Mammary epithelial cell (primary cell): ENCODE measurements at regions of chr15 and their contacts with region 1.

Region 1: GRCh38 chr15:82809404-82810060 is at the start of gene WHAMM:
- DNase-seq: peak; percentile 99
- H3K4me3 ChIP-seq: peak within 1 kb of the TSS; percentile 92 to 97 (median 96)
- H3K27ac ChIP-seq: peak within 1 kb of the TSS; percentile 95
- H3K4me1 ChIP-seq: peaks cover 10% of the 10 kb centered on the region
- H3K27me3 ChIP-seq: no peaks in the 10 kb centered on the region
- CTCF ChIP-seq: no peak
- total RNA-seq, gene WHAMM: 7.3 to 8.6 TPM

Region 2: GRCh38 chr15:82540055-82540983 is 269.2 kb before region 1 on chr15 and contains the start of gene RPS17:
- CTCF ChIA-PET with region 1: no interaction called
- dilution Hi-C with region 1: no loop called
- in situ Hi-C with region 1: no loop called
- intact Hi-C with region 1: loop called (anchors 1 kb)
- DNase-seq: peak; percentile 96
- H3K4me3 ChIP-seq: peak within 1 kb of the TSS; percentile 83 to 92 (median 92)
- H3K27ac ChIP-seq: peak within 1 kb of the TSS; percentile 73
- H3K4me1 ChIP-seq: peaks cover 21% of the 10 kb centered on the region
- H3K27me3 ChIP-seq: no peaks in the 10 kb centered on the region
- CTCF ChIP-seq: peak; percentile 78 to 98
- total RNA-seq, gene RPS17: 1,069 to 1,616 TPM

Region 3: DNA sequence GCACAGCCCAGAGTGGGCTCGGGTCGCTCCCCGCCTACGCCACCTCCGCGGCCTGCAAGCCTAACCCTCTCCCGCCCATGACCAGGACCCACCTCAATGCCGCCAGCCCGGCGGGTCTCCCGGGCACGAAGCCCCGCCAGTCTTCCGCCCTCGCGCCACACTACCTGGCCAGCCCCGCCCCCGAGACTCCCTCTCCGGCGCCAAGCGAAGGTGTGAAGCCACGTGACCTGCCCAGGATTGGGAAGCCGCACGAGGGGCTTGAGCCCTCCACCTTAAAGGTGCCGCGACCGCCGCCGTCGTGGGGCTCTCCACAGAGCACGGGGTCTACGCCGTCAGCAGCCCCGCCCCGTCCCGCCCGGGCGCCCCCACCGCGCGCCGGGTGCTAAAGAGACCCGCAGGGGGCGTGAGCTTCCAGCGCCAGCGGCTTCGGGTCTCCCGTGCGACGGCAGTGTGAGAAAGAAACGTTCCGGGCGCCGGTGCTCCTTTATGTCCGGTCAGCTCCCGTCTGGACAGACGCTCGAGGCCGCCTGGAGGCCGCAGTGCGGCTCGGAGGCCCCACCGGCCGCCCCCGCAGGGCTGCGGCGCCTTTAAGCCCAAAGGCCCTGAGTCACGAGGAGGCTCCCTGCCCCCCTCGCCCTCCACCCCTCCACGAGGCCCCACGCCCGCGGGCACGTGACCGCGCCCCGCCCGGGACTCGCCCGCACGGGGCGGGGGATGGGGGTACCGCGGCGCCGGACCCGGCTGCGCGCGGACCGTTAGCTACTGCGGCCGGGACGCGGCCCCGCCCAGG is 162.3 kb before region 1 on chr15 and contains the start of gene CPEB1:
- CTCF ChIA-PET with region 1: no interaction called
- dilution Hi-C with region 1: no loop called
- in situ Hi-C with region 1: no loop called
- intact Hi-C with region 1: loop called (anchors 5 kb)
- DNase-seq: peak; percentile 6
- H3K4me3 ChIP-seq: peak within 1 kb of the TSS; percentile 40 to 43 (median 41)
- H3K27ac ChIP-seq: no peak within 1 kb of the TSS
- H3K4me1 ChIP-seq: peaks cover 12% of the 10 kb centered on the region
- H3K27me3 ChIP-seq: peaks cover 29% of the 10 kb centered on the region
- CTCF ChIP-seq: peak in 1 of 2 donors; percentile 20
- total RNA-seq, gene CPEB1: 0.38 to 8.7 TPM

Region 4: DNA sequence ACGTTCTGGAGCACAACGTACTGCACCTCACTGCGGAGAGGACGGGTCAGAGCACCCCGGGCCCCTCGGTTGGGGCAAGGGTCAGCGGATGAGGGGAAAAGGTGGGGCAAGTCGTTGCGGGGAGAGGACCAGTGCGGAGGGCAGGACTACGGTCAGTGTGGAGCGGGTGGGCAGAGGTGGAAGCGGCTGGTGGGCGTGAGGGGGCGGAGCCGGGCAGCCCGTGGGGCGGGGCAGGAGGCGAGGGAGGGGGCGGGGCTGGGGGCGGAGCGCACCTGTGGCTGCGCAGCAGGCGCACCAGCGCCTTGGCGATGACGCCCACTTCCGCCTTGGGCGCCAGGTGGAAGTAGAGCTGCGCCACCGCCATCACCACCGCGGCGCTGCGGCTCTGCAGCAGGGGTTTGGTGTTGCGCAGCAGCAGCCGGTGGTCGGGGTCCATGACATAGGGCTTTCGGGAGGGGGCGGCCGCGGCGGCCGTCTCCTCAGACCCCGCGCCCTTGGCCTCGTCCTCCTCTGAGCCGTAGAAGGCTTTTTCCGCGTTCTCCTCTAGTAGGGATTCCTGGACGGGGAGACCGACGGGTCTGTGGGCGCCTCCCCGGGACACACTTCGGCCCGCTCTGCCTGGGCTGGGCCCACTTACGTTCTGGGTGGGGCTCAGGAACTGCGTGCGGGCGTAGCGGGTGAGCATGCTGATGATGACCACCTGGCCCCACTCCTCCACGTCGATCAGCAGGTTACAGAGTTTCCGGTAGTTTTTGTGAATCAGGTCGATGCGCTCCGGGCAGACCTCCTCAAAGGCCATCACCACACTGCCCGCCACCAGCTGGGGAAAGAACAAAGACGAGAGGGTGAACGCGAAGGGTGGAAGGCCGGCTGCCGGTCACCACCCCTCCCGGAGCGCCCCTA is 129.1 kb before region 1 on chr15:
- CTCF ChIA-PET with region 1: no interaction called
- dilution Hi-C with region 1: no loop called
- in situ Hi-C with region 1: no loop called
- intact Hi-C with region 1: loop called (anchors 1 kb)
- DNase-seq: peak; percentile 71
- H3K4me3 ChIP-seq: peak overlapping the region; percentile 67 to 80 (median 69)
- H3K27ac ChIP-seq: no peak overlapping the region
- H3K4me1 ChIP-seq: peaks cover 10% of the 10 kb centered on the region
- H3K27me3 ChIP-seq: no peaks in the 10 kb centered on the region
- CTCF ChIP-seq: peak in 1 of 2 donors; percentile 57

Region 5: DNA sequence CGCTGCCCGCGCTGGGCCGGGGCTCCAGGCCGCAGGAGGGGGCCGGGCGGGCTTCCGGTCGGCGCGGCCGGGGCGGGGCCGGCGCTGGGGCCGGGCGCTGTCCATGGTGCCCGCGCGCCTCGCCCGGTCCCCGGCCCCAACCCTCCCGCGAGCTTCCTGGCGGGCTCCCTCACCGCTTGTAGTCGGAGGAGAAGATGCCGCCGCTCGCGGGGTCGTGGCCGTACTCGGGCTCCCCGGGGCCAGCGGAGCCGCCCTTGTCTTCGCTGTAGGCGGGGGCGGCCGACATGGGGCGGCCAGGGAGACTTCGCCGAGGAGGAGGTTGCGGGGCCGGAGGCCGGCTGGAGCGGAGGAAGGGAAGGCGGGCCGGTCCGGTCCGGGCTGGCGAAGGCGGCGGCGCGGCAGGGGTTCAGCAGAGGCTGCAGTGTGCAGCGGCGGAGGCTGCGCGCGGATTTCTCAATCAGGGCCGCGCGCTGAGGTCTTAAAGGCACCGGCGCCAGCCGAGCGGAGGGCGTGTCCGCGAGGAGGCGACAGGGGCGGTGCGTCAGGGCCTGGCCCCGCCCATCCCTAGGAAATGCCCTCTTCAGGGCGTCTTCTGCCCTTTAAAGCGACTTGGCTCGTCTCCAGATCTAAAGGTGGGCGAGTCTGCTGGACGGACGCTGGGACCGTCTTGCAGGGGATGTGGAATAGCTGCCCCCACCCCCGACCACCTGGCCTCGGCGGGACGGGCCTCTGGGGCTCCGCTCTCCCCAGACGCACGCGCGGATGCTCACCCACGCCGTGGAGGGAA is 99.9 kb before region 1 on chr15 and contains the start of gene AP3B2:
- CTCF ChIA-PET with region 1: no interaction called
- dilution Hi-C with region 1: no loop called
- in situ Hi-C with region 1: no loop called
- intact Hi-C with region 1: loop called (anchors 1 kb)
- DNase-seq: peak; percentile 69
- H3K4me3 ChIP-seq: peak within 1 kb of the TSS; percentile 88 to 96 (median 89)
- H3K27ac ChIP-seq: no peak within 1 kb of the TSS
- H3K4me1 ChIP-seq: peaks cover 7% of the 10 kb centered on the region
- H3K27me3 ChIP-seq: no peaks in the 10 kb centered on the region
- CTCF ChIP-seq: no peak
- total RNA-seq, gene AP3B2: 5.5 to 12.3 TPM

Region 6: DNA sequence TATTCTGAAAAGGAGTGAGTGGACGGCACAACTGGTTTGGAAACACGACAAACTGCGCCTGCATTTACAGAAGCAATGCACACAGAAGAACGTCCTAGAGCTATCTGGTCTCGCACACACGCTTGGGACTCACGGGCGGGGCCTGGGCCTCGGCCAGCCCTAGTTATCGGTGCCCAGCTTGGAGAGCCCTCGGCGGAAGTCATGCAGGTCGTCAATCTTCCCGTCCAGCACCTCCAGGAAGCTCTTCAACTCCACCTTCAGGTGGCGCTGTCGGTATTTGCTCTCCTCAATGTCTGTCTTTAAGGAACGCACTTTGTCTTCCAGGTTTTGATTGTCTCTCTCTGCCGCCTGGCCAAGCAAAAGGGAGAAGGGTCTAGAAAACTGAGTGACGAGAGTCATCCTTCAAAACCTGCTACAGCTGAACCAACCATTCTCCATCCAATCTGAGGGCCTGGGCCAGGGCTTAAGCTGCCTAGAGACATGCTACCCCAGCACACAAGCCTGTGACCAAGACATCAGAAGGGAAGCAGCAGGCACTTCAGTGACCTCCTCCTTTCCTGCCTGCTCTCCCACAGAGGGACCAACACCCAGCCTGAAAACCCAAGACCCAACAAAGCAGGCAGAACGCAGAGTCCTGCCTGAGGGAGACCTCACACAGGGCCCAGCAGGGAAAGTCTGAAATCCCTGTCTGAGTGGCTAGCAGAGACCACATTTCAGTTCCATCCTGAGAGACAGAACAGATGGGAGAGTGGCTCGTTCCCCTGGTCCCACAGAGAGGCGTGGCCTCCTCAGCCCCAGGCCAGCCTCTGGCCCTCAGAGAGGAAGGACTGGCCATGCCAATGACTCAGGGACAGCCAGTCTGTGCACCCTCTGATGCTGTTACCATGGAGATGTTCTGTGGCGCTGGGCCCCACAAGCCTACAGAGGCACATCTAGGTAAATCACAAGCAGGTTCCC is 40.3 kb after region 1 on chr15:
- CTCF ChIA-PET with region 1: no interaction called
- dilution Hi-C with region 1: loop called (anchors 5 kb)
- in situ Hi-C with region 1: no loop called
- intact Hi-C with region 1: no loop called
- DNase-seq: peak; percentile 42
- H3K4me3 ChIP-seq: no peak overlapping the region
- H3K27ac ChIP-seq: no peak overlapping the region
- H3K4me1 ChIP-seq: peaks cover under 1% of the 10 kb centered on the region
- H3K27me3 ChIP-seq: no peaks in the 10 kb centered on the region
- CTCF ChIP-seq: peak; percentile 50 to 66